HepG2 (cell line): ENCODE measurements at regions of chr12 and their contacts with region 1.

Region 1: GRCh38 chr12:10364815-10365622 is 24.8 kb downstream of the KLRK1 start:
- DNase-seq: peak; percentile 53
- ATAC-seq: peak; percentile 57
- H3K4me3 ChIP-seq: peak overlapping the region; percentile 74 to 82 (median 78)
- H3K27ac ChIP-seq: peak overlapping the region; percentile 0
- H3K4me1 ChIP-seq: peaks cover 24% of the 10 kb centered on the region
- H3K27me3 ChIP-seq: no peaks in the 10 kb centered on the region; a peak in 1 of 5 replicates
- CTCF ChIP-seq: no peak
- EP300 ChIP-seq: no peak
- POLR2A ChIP-seq: no peak
- RAD21 ChIP-seq: no peak

Region 2: GRCh38 chr12:10354502-10354901 is 10.5 kb before region 1 on chr12:
- CTCF ChIA-PET with region 1: no interaction called
- POLR2A ChIA-PET with region 1: no interaction called
- in situ Hi-C with region 1: no loop called
- intact Hi-C with region 1: no loop called
- DNase-seq: peak; percentile 19
- ATAC-seq: no peak
- H3K4me3 ChIP-seq: no peak overlapping the region
- H3K27ac ChIP-seq: no peak overlapping the region
- H3K4me1 ChIP-seq: no peaks in the 10 kb centered on the region
- H3K27me3 ChIP-seq: no peaks in the 10 kb centered on the region
- CTCF ChIP-seq: no peak
- EP300 ChIP-seq: no peak
- POLR2A ChIP-seq: no peak
- RAD21 ChIP-seq: no peak

Region 3: DNA sequence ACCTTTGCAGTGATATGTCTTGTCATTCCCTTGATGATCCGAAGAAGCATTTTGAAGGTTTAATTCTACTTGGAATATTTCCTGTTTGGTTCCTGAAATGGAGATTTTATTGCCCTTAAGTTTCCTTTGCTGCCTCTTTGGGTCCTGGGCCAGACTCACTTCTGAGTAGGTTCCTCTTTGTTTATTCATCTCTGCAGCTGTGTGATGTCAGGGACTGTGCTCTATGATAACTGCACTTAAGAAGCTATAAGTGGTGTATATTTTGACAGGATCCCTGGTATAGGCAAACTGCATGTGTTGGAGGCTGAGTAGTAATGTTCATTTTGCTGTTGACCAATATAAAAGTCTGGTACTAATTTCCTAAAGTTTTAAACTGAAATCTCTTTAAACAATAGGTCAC is 44.4 kb after region 1 on chr12 and contains the start of gene KLRC4:
- CTCF ChIA-PET with region 1: no interaction called
- POLR2A ChIA-PET with region 1: no interaction called
- in situ Hi-C with region 1: no loop called
- intact Hi-C with region 1: loop called (anchors 5 kb)
- DNase-seq: no peak
- ATAC-seq: no peak
- H3K4me3 ChIP-seq: no peak within 1 kb of the TSS
- H3K27ac ChIP-seq: no peak within 1 kb of the TSS
- H3K4me1 ChIP-seq: no peaks in the 10 kb centered on the region
- H3K27me3 ChIP-seq: no peaks in the 10 kb centered on the region
- CTCF ChIP-seq: no peak
- EP300 ChIP-seq: no peak
- POLR2A ChIP-seq: no peak
- RAD21 ChIP-seq: no peak
- total RNA-seq, gene KLRC4: not detected in 2 replicates